ENCODE measurements at regions of chr12 and their contacts with region 1.

Region 1: GRCh38 chr12:123905319-123905925 is 67.2 kb downstream of the CCDC92 start:
- DNase-seq: peak; percentile 73
- H3K4me3 ChIP-seq: no peak overlapping the region
- H3K27ac ChIP-seq: no peak overlapping the region
- H3K4me1 ChIP-seq: no peaks in the 10 kb centered on the region
- H3K27me3 ChIP-seq: peaks cover 3 to 8% of the 10 kb centered on the region in 2 experiments
- CTCF ChIP-seq: peak; percentile 66 to 73
- POLR2A ChIP-seq: no peak

Region 2: DNA sequence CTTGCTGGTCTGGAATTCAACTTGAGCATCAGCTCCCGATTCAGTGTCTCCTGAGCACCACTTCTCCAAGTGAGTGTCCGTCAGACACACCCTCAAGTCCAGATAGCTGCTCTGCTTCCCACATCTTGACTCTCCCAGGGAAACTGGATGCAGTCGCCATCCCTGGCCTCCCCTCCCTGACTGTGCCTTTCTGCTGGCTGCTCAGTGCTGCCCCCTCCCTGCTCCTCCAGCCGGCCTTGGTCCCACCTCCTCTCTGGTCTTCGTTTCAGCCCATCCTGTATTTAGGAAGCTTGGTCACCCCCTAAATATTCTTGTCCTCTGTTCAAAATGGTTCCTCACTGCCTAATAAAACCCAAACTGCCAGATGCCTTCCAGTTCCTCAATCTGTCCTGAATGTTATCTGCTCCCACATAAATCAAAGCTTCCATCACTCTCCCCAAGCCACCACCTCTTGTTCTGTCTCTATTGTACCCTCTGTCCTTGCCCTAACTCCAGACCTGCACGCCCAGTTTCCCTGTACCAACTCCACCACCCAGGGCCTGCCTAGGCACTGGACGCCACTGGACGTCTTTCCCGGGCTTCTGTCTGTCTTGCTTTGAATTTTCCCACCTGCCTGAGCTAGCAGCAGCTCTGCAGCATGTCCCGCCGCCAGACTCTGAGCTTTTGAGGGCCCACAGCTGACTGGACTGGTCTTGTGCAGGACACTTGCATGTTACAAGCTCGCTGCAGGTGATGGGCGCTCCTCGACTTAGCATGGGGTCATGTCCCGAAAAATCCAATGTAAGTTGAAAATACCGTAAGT is 33.5 kb after region 1 on chr12:
- CTCF ChIA-PET with region 1: interaction called, 12 read pairs
- POLR2A ChIA-PET with region 1: no interaction called
- dilution Hi-C with region 1: no loop called
- intact Hi-C with region 1: no loop called
- DNase-seq: no peak
- H3K4me3 ChIP-seq: no peak overlapping the region
- H3K27ac ChIP-seq: no peak overlapping the region
- H3K4me1 ChIP-seq: peaks cover 12% of the 10 kb centered on the region
- H3K27me3 ChIP-seq: no peaks in the 10 kb centered on the region
- CTCF ChIP-seq: peak; percentile 24 to 42
- POLR2A ChIP-seq: no peak

Region 3: GRCh38 chr12:123952037-123952436 is 46.6 kb after region 1 on chr12:
- CTCF ChIA-PET with region 1: interaction called, 10 read pairs
- POLR2A ChIA-PET with region 1: interaction called, 3 read pairs
- dilution Hi-C with region 1: no loop called
- intact Hi-C with region 1: no loop called
- DNase-seq: peak; percentile 43
- H3K4me3 ChIP-seq: peak overlapping the region in 1 of 3 experiments; percentile 1
- H3K27ac ChIP-seq: peak overlapping the region; percentile 9
- H3K4me1 ChIP-seq: peaks cover 18% of the 10 kb centered on the region
- H3K27me3 ChIP-seq: no peaks in the 10 kb centered on the region
- CTCF ChIP-seq: no peak
- POLR2A ChIP-seq: no peak

Region 4: DNA sequence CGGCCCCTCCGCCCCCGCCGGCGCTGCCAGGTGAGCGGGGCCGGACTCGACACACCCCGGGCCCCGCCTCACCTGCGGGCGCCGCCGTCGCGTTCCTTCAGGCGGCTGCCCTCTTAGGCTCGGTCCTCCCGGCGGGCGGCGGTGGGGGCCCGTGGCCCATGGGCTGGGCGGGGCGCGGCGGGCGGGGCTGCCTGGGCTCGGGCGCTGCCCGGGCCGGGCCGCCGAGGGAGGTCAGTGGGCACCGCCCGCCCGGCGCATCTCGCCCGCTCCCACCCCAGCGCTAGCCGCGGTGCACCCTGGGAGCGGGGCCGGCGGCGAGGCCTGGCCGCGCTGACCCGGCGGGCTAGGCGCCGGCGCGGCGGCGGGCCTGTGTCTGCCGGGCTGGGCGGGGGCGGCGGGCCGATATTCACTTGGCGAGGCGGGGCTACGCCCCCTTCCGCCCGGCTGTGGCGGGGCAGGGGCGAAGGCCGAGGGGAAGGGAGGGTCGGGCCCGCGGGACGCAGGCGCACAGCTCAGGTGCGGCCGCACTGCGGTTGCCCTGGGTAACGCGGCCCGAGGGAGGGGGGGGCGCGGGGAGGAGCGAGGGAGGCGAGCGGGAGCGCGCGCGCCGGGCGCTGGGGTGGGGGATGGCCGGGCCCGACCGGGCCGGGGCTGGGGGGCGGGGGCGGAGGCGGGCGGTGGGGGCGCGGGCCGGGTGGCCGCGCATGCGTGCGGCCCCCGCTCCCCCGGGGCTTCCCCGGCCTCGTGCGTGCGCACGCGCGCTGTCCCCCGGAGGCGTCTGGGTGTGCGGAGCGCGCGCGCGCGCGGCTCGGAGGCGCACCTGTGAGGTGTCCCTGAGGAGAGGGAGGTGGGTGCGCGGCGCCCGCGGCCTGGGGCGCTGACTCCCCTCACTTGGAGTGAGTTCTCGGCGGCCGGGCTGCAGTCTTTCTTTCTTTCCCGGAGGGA is 67.3 kb after region 1 on chr12 and contains the starts of genes CCDC92 and ZNF664:
- CTCF ChIA-PET with region 1: interaction called, 23 read pairs
- POLR2A ChIA-PET with region 1: no interaction called
- dilution Hi-C with region 1: no loop called
- intact Hi-C with region 1: loop called (anchors 1 kb)
- DNase-seq: peak; percentile 89
- H3K4me3 ChIP-seq: peak within 1 kb of the TSS; percentile 75 to 85 (median 75)
- H3K27ac ChIP-seq: peak within 1 kb of the TSS; percentile 32
- H3K4me1 ChIP-seq: peaks cover 4% of the 10 kb centered on the region
- H3K27me3 ChIP-seq: no peaks in the 10 kb centered on the region
- CTCF ChIP-seq: peak in 1 of 2 donors; percentile 7
- POLR2A ChIP-seq: peak; percentile 62
- total RNA-seq, gene CCDC92: 35.1 and 41.6 TPM in 2 replicates
- total RNA-seq, gene ZNF664: 63.3 and 71.3 TPM in 2 replicates

Region 5: GRCh38 chr12:123983822-123984485 is 78.5 kb after region 1 on chr12:
- CTCF ChIA-PET with region 1: interaction called, 106 read pairs
- POLR2A ChIA-PET with region 1: no interaction called
- dilution Hi-C with region 1: no loop called
- intact Hi-C with region 1: loop called (anchors 1 kb)
- DNase-seq: peak; percentile 60
- H3K4me3 ChIP-seq: no peak overlapping the region
- H3K27ac ChIP-seq: no peak overlapping the region
- H3K4me1 ChIP-seq: no peaks in the 10 kb centered on the region
- H3K27me3 ChIP-seq: no peaks in the 10 kb centered on the region
- CTCF ChIP-seq: peak; percentile 56 to 62
- POLR2A ChIP-seq: no peak

Region 6: GRCh38 chr12:124026755-124027745 is 121.6 kb after region 1 on chr12:
- CTCF ChIA-PET with region 1: interaction called, 133 read pairs
- POLR2A ChIA-PET with region 1: no interaction called
- dilution Hi-C with region 1: no loop called
- intact Hi-C with region 1: loop called (anchors 1 kb)
- DNase-seq: peak; percentile 8
- H3K4me3 ChIP-seq: no peak overlapping the region
- H3K27ac ChIP-seq: no peak overlapping the region
- H3K4me1 ChIP-seq: peaks cover 14% of the 10 kb centered on the region
- H3K27me3 ChIP-seq: no peaks in the 10 kb centered on the region
- CTCF ChIP-seq: no peak
- POLR2A ChIP-seq: no peak

Measured in endothelial cell of umbilical vein (primary cell).